Activated CD4-positive, alpha-beta memory T cell treated with anti-CD3 and anti-CD28 coated beads, Interleukin-2, amount 10 ng/mL, durations not matched to agents 7 days and 5 days (primary cell): ENCODE measurements at regions of chr6 and their contacts with region 1.

Region 1: DNA sequence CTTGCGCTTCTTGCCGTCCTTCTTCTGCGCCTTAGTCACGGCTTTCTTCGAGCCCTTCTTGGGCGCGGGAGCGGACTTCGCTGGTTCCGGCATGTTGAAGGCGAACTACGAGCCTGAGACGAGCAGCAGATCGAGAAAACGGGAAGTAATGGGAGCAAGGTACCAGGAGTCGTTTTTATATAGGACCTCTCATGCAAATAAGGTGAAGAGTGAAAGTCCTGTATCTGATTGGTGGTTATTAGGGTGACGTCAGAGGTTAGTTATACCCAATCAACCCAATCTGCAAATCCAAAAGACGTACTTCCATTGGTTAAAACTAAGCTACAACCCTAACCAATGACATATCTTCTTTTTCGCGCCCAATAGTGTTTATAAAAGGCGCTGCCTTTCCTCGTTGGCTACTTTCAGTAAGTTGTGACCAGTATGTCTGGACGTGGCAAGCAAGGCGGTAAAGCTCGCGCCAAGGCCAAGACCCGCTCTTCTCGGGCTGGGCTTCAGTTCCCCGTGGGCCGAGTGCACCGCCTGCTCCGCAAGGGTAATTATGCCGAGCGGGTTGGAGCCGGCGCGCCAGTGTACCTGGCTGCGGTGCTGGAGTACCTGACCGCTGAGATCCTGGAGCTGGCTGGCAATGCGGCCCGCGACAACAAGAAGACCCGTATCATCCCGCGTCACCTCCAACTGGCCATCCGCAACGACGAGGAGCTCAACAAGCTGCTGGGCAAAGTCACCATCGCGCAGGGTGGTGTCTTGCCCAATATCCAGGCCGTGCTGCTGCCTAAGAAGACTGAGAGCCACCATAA is 100.6 kb upstream of the PRSS16 start:
- DNase-seq: peak; percentile 87
- H3K4me3 Mint-ChIP-seq: no peak overlapping the region
- H3K27ac Mint-ChIP-seq: no peak overlapping the region
- H3K4me1 Mint-ChIP-seq: peaks cover 31% of the 10 kb centered on the region
- H3K27me3 Mint-ChIP-seq: no peaks in the 10 kb centered on the region

Region 2: GRCh38 chr6:26183581-26184366 is 963.1 kb before region 1 on chr6:
- CTCF ChIA-PET with region 1: no interaction called
- POLR2A ChIA-PET with region 1: interaction called, 10 read pairs
- DNase-seq: peak; percentile 78
- H3K4me3 Mint-ChIP-seq: peak overlapping the region; percentile 75
- H3K27ac Mint-ChIP-seq: peak overlapping the region; percentile 92
- H3K4me1 Mint-ChIP-seq: peaks cover 71% of the 10 kb centered on the region
- H3K27me3 Mint-ChIP-seq: no peaks in the 10 kb centered on the region

Region 3: DNA sequence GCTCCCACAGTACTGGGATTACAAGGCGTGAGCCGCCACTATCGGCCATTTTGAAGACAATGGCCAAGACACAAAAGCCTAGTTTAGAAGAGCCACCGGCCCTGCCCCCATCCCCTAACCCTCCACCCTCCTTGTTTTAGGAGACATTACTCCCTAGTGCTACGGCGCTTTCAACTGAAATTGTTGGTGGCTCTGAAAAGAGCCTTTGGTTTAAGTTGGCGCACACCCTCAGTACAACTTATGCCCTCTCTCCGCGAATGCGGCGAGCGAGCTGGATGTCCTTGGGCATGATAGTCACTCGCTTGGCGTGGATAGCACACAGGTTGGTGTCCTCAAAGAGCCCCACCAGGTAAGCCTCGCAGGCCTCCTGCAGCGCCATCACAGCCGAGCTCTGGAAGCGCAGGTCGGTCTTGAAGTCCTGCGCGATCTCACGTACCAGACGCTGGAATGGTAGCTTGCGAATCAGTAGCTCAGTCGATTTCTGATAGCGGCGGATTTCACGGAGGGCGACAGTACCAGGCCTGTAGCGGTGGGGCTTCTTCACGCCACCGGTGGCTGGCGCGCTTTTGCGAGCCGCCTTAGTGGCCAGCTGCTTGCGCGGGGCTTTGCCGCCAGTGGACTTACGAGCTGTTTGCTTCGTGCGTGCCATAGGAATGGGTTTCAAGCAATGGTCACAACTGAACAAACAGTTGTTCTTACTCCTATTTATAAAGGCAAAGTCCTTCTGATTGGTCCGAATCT is 896.8 kb before region 1 on chr6:
- CTCF ChIA-PET with region 1: no interaction called
- POLR2A ChIA-PET with region 1: interaction called, 21 read pairs
- DNase-seq: peak; percentile 84
- H3K4me3 Mint-ChIP-seq: peak overlapping the region; percentile 90
- H3K27ac Mint-ChIP-seq: peak overlapping the region; percentile 93
- H3K4me1 Mint-ChIP-seq: peaks cover 42% of the 10 kb centered on the region
- H3K27me3 Mint-ChIP-seq: no peaks in the 10 kb centered on the region

Region 4: GRCh38 chr6:27157459-27158315 is 10.8 kb after region 1 on chr6:
- CTCF ChIA-PET with region 1: interaction called, 7 read pairs
- POLR2A ChIA-PET with region 1: interaction called, 103 read pairs
- DNase-seq: peak; percentile 84
- H3K4me3 Mint-ChIP-seq: peak overlapping the region; percentile 69
- H3K27ac Mint-ChIP-seq: peak overlapping the region; percentile 69
- H3K4me1 Mint-ChIP-seq: peaks cover 52% of the 10 kb centered on the region
- H3K27me3 Mint-ChIP-seq: no peaks in the 10 kb centered on the region

Region 5: GRCh38 chr6:27190126-27190525 is 43.2 kb after region 1 on chr6:
- CTCF ChIA-PET with region 1: no interaction called
- POLR2A ChIA-PET with region 1: no interaction called
- DNase-seq: no peak
- H3K4me3 Mint-ChIP-seq: no peak overlapping the region
- H3K27ac Mint-ChIP-seq: no peak overlapping the region
- H3K4me1 Mint-ChIP-seq: peaks cover 13% of the 10 kb centered on the region
- H3K27me3 Mint-ChIP-seq: peaks cover 5% of the 10 kb centered on the region

Region 6: GRCh38 chr6:27479319-27480182 is 332.6 kb after region 1 on chr6:
- CTCF ChIA-PET with region 1: no interaction called
- POLR2A ChIA-PET with region 1: interaction called, 18 read pairs
- DNase-seq: peak; percentile 86
- H3K4me3 Mint-ChIP-seq: no peak overlapping the region
- H3K27ac Mint-ChIP-seq: no peak overlapping the region
- H3K4me1 Mint-ChIP-seq: peaks cover 10% of the 10 kb centered on the region
- H3K27me3 Mint-ChIP-seq: peaks cover 4% of the 10 kb centered on the region

Region 7: GRCh38 chr6:27838058-27838944 is 691.4 kb after region 1 on chr6:
- CTCF ChIA-PET with region 1: interaction called, 5 read pairs
- POLR2A ChIA-PET with region 1: interaction called, 108 read pairs
- DNase-seq: peak; percentile 90
- H3K4me3 Mint-ChIP-seq: no peak overlapping the region
- H3K27ac Mint-ChIP-seq: no peak overlapping the region
- H3K4me1 Mint-ChIP-seq: peaks cover 31% of the 10 kb centered on the region
- H3K27me3 Mint-ChIP-seq: no peaks in the 10 kb centered on the region